Dorsolateral prefrontal cortex (tissue), 120 donors: ENCODE measurements at regions of chr20 and their contacts with region 1.

Region 1: GRCh38 chr20:59782986-59783640 is 150.3 kb downstream of the SYCP2 start:
- DNase-seq: peak; percentile 61 to 82 (median 78)
- H3K4me3 ChIP-seq: no peak overlapping the region
- H3K27ac ChIP-seq: peak overlapping the region in 16 of 59 donors; percentile 5 to 46 (median 31)
- H3K27me3 ChIP-seq: no peaks in the 10 kb centered on the region
- CTCF ChIP-seq: peak; percentile 67 to 96 (median 86)

Region 2: GRCh38 chr20:59835448-59836395 is 52.6 kb after region 1 on chr20:
- intact Hi-C with region 1: loop called in 1 of 2 experiments (anchors 5 kb)
- DNase-seq: peak in 6 of 10 donors; percentile 33 to 77 (median 56)
- H3K4me3 ChIP-seq: peak overlapping the region in 54 of 59 donors; percentile 6 to 55 (median 35)
- H3K27ac ChIP-seq: peak overlapping the region in 42 of 59 donors; percentile 1 to 75 (median 34)
- H3K27me3 ChIP-seq: no peaks in the 10 kb centered on the region
- CTCF ChIP-seq: no peak

Region 3: DNA sequence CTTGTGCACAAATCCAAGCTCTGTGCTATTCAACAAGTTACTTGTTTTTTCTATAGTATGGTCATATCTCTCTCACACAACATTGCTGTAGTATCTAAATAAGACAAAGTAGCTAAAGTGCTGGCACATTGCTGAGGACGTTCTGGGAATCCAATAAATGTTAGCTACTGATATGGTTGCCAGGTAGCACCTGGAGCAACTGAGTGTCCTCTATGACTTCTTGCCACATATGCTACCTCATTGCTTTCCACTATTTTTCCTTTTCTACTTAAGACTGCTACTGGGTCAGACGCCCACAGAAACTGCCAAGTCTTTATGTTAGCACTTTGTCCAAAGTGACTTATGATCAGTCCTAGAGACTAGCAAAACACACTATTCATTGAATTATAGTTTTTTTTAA is 65.1 kb after region 1 on chr20:
- intact Hi-C with region 1: loop called (anchors 5 kb)
- DNase-seq: no peak
- H3K4me3 ChIP-seq: no peak overlapping the region
- H3K27ac ChIP-seq: peak overlapping the region in 1 of 59 donors; percentile 2
- H3K27me3 ChIP-seq: no peaks in the 10 kb centered on the region
- CTCF ChIP-seq: no peak

Region 4: GRCh38 chr20:59939888-59940173 is 156.7 kb after region 1 on chr20:
- intact Hi-C with region 1: loop called in 1 of 2 experiments (anchors 5 kb)
- DNase-seq: peak in 1 of 10 donors; percentile 50
- H3K4me3 ChIP-seq: peak overlapping the region; percentile 56 to 93 (median 78)
- H3K27ac ChIP-seq: peak overlapping the region; percentile 59 to 100 (median 98)
- H3K27me3 ChIP-seq: no peaks in the 10 kb centered on the region
- CTCF ChIP-seq: no peak

Region 5: DNA sequence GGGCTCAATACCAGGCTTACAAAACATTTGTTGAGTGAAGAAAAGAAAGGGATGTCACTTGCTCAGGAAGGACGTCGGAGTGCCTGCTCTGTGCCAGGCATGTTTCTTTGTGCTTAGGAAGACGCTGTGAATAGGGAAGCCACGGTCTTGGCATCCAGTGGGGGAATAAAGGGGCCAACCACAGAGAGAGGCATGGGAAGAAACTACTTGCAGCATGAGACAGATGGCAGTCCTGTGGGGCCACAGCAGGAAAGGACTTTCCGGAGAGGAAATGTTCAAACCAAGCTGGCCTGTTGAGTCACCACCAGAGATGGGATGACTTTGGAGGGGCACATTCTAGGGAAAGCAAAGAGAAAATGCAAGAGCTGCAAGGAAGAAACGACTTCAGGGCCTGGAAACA is 348.3 kb after region 1 on chr20:
- intact Hi-C with region 1: no loop called
- DNase-seq: no peak
- H3K4me3 ChIP-seq: no peak overlapping the region
- H3K27ac ChIP-seq: no peak overlapping the region
- H3K27me3 ChIP-seq: peaks cover 0 to 8% (median 0%) of the 10 kb centered on the region in 45 donors
- CTCF ChIP-seq: no peak